K562 (cell line): ENCODE measurements at regions of chr4 and their contacts with region 1.

Region 1: GRCh38 chr4:154634058-154634457 is 21.6 kb upstream of the FGG start:
- DNase-seq: no peak
- ATAC-seq: no peak
- H3K4me3 ChIP-seq: no peak overlapping the region
- H3K27ac ChIP-seq: no peak overlapping the region
- H3K4me1 ChIP-seq: no peaks in the 10 kb centered on the region
- H3K27me3 ChIP-seq: no peaks in the 10 kb centered on the region
- CTCF ChIP-seq: no peak
- EP300 ChIP-seq: no peak
- POLR2A ChIP-seq: no peak
- RAD21 ChIP-seq: no peak

Region 2: DNA sequence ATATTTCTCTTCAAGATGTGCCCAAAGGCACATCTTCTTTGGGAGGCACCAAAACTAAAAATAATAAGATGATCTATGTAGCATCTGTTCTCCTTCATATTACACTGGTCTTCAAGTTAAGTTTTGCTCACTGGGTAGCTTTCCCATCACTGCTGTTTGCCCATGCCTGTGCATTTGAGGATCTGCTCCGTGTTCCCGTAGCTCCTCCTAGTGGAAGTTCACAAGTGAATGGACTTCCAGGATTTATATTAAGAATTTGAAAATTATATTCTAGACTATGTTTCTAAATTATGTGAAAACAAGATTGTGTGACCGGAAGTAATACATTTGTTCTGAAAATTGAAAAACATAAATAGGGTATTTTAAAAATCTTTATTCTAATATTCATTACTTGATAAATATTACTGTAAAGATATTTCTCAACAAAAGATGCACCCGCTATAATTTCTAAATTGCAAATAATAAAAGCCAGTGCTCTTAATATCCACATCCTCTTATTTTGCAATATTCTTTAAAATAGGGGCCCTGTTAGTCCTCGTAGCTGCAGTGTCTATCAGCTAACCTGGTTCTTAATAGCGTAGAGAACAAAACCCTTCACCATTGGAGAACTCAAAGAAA is 294.7 kb after region 1 on chr4:
- CTCF ChIA-PET with region 1: no interaction called
- POLR2A ChIA-PET with region 1: no interaction called
- in situ Hi-C with region 1: no loop called
- intact Hi-C with region 1: loop called (anchors 10 kb)
- DNase-seq: peak in 1 of 4 experiments; percentile 6
- ATAC-seq: no peak
- H3K4me3 ChIP-seq: no peak overlapping the region
- H3K27ac ChIP-seq: no peak overlapping the region
- H3K4me1 ChIP-seq: no peaks in the 10 kb centered on the region
- H3K27me3 ChIP-seq: no peaks in the 10 kb centered on the region
- CTCF ChIP-seq: peak in 2 of 3 experiments; percentile 10 to 40; a peak in 3 of 6 replicates
- EP300 ChIP-seq: no peak
- POLR2A ChIP-seq: no peak
- RAD21 ChIP-seq: 0 out of 4 replicates have a peak, but pooled peaks of 1 of the 2 experiments have one; percentile 33